ENCODE measurements at regions of chr1 and their contacts with region 1.

Region 1: GRCh38 chr1:47738560-47739182 is 258.5 kb downstream of the TRABD2B start:
- DNase-seq: peak in 3 of 5 donors; percentile 40 to 55 (median 45)
- ATAC-seq: peak; percentile 77 to 86 (median 80)
- H3K4me3 ChIP-seq: no peak overlapping the region
- H3K27ac ChIP-seq: no peak overlapping the region
- H3K4me1 ChIP-seq: no peaks in the 10 kb centered on the region
- H3K27me3 ChIP-seq: peaks cover 0 to 36% (median 8%) of the 10 kb centered on the region in 9 donors
- CTCF ChIP-seq: peak; percentile 61 to 81 (median 74)
- POLR2A ChIP-seq: no peak

Region 2: GRCh38 chr1:47696740-47697441 is 41.8 kb before region 1 on chr1:
- intact Hi-C with region 1: no loop called
- DNase-seq: no peak
- ATAC-seq: no peak
- H3K4me3 ChIP-seq: no peak overlapping the region
- H3K27ac ChIP-seq: no peak overlapping the region
- H3K4me1 ChIP-seq: no peaks in the 10 kb centered on the region
- H3K27me3 ChIP-seq: peaks cover 0 to 13% (median 0%) of the 10 kb centered on the region in 9 donors
- CTCF ChIP-seq: no peak
- POLR2A ChIP-seq: no peak

Region 3: DNA sequence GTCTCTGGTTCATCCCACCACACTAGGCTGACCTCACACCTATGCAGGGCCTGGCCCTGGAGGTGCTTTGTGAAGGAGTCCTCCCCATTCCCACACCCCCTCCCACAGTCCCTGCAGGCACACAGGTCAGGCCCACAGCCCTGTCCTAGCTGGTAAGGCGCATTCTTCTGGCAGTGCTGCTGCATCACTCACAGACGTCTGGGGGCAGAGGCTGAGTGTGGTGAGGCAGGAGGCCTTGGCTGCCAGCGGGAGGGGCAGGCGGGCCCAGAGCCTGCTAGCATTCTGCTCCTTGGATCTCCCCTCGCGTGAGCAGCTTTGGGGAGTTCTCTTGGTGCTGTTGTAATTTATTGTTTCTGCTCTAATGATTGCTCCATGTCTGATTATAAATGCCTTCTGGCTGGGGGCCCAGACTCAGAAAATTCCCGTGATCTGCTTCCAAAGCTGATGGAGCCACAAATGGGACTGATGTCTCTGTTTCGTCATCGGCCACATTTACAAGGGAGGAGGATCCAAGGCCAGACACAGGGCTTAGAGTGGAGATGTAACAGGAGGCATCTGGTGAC is 195.7 kb after region 1 on chr1:
- intact Hi-C with region 1: loop called in 2 of 10 experiments (anchors 5 to 10 kb)
- DNase-seq: peak; percentile 42 to 72 (median 70)
- ATAC-seq: peak; percentile 37 to 71 (median 52)
- H3K4me3 ChIP-seq: no peak overlapping the region
- H3K27ac ChIP-seq: peak overlapping the region in 2 of 12 donors; percentile 18 to 45
- H3K4me1 ChIP-seq: peaks cover 0 to 33% (median 5%) of the 10 kb centered on the region in 12 donors
- H3K27me3 ChIP-seq: no peaks in the 10 kb centered on the region
- CTCF ChIP-seq: no peak
- POLR2A ChIP-seq: no peak

Region 4: GRCh38 chr1:47997289-47998200 is 258.9 kb after region 1 on chr1 and contains the start of gene TRABD2B:
- intact Hi-C with region 1: loop called in 6 of 10 experiments (anchors 2 to 10 kb)
- DNase-seq: peak; percentile 77 to 91 (median 82)
- ATAC-seq: peak; percentile 58 to 89 (median 84)
- H3K4me3 ChIP-seq: peak within 1 kb of the TSS; percentile 49 to 86 (median 63)
- H3K27ac ChIP-seq: peak within 1 kb of the TSS in 11 of 12 donors; percentile 34 to 76 (median 63)
- H3K4me1 ChIP-seq: peaks cover 0 to 23% (median 7%) of the 10 kb centered on the region in 12 donors
- H3K27me3 ChIP-seq: peaks cover 3 to 48% (median 10%) of the 10 kb centered on the region in 9 donors
- CTCF ChIP-seq: peak; percentile 89 to 98 (median 94)
- POLR2A ChIP-seq: peak in 1 of 2 donors; percentile 11
- total RNA-seq, gene TRABD2B: 0.31 to 1.1 (median 0.87) TPM

Region 5: DNA sequence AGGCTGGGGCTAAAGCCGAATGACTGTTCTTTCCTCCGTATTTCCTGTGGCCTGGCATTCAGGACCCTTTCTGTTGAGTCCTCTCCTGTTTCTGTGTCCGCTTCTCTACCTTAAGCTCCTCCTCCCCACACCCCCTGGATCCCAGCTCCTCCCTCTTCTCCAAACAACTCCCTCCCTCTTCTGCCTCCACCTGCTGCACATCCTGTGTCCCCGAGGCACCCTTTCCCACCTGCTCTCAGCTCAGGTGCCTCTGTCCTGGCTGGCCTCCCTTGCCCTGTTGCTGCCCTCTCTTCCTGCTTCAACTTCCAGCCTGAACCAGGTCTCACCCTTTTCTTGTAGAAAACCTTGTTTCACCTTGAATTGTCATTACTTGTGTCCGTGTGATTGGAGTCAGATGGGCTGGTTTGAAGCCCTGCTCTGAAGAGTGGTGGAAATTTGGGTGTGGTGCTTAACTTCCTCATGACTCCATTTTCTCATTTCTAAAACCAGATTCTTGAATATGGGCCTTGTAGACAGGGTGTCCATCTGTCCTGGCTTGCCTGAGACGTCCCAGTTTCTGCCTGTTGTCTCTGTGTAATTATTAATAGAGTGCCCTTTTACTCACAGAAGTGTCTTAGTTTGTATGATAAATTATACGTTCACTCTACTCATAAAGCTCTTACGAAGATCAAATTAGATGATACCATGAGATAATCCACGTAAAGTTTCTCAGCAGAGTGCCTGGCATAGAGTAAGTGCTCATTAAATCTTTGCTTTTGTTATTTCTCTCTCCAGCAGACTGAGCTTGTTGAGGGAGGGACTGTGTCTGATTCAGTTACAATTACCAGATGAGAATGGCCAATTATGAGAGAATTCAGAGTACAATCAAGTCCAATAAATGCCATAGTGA is 317.4 kb after region 1 on chr1:
- intact Hi-C with region 1: loop called (anchors 1 to 5 kb)
- DNase-seq: no peak
- ATAC-seq: no peak
- H3K4me3 ChIP-seq: no peak overlapping the region
- H3K27ac ChIP-seq: no peak overlapping the region
- H3K4me1 ChIP-seq: peaks cover 0 to 13% (median 2%) of the 10 kb centered on the region in 12 donors
- H3K27me3 ChIP-seq: no peaks in the 10 kb centered on the region
- CTCF ChIP-seq: no peak
- POLR2A ChIP-seq: no peak

Region 6: DNA sequence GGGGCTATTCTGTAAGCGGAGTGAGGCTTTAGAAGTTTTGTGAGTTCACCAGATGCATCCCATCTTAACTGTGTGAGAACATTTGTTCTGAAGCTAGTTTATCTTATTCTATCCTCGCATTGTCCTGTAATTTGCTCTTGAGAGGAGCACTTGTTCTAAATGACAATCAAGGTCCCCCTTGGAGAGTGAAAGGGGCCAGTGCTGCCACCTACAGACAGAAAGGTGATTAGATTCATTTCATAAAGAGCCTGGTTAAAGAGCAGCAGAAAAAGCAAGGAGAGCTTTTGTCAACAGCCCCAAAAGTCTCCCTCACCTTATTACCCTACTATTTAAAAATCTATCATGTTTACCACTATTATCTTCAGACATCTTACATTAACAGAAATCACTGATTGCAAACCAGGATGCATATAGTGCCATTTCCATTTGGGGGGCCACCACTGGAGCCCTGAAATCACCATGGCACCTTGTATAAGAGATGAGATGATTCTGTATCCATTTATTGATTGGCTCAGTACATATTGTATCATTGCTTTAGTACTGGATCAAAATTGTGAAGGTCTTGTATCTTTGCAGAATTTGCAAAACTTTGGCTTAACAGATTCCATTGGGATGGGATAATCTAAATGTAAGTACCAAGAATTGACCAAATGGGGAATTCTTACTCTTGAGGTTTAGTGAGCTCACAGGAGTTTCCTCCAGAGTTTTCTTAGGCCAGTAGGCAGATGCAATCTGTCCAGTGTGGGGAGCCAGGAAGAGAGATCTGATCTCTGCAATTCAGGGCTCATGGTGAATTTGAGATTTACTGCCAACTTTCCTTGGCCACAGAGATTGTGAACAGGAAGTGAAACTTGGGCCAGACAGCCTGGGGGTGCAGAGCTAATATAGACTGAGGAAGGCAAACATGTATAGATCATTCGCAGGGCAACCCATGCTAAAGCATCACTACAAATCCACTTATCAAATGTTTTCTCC is 322.8 kb after region 1 on chr1:
- intact Hi-C with region 1: loop called (anchors 1 to 5 kb)
- DNase-seq: peak in 4 of 5 donors; percentile 33 to 57 (median 42)
- ATAC-seq: peak; percentile 65 to 86 (median 74)
- H3K4me3 ChIP-seq: no peak overlapping the region
- H3K27ac ChIP-seq: no peak overlapping the region
- H3K4me1 ChIP-seq: peaks cover 0 to 4% (median 0%) of the 10 kb centered on the region in 12 donors
- H3K27me3 ChIP-seq: no peaks in the 10 kb centered on the region
- CTCF ChIP-seq: peak; percentile 50 to 82 (median 74)
- POLR2A ChIP-seq: no peak

Region 7: GRCh38 chr1:48196237-48196636 is 457.6 kb after region 1 on chr1:
- intact Hi-C with region 1: loop called in 7 of 10 experiments (anchors 5 to 10 kb)
- DNase-seq: no peak
- ATAC-seq: no peak
- H3K4me3 ChIP-seq: no peak overlapping the region
- H3K27ac ChIP-seq: no peak overlapping the region
- H3K4me1 ChIP-seq: peaks cover 0 to 4% (median 0%) of the 10 kb centered on the region in 12 donors
- H3K27me3 ChIP-seq: peaks cover 0 to 13% (median 0%) of the 10 kb centered on the region in 9 donors
- CTCF ChIP-seq: no peak
- POLR2A ChIP-seq: no peak

Region 8: DNA sequence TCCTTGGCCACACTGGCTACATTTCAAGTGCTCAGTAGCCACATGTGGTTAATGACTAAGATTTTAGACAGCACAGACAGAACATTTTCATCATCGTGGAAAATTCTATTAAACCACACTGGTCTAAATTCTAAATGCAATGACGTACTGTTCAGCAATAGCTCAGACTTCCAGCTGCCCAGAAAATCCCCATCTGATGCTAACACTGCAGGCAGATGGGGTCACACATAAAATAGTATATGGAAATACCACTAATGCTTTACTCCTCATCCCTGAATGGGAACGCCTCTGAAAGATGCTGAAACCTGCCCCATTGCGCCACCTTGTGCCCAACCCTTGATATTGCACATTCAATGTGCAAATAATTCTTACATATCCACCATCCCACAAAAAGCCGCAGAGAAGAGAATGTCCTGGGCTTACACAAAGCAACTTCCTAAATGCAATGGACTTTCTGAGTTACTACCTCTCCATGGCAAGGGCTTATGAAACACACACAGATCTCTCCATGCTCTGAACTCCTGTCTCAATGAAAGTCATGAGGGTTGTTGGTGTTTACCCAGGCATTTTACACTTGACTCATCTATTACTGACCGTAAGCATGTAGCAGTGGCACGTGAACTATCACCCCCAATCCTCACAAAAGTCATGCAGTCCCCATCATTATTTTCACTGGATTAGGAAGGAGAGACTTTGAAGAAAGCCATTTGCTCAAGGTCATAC is 463.5 kb after region 1 on chr1:
- intact Hi-C with region 1: loop called in 9 of 10 experiments (anchors 2 to 10 kb)
- DNase-seq: peak; percentile 47 to 73 (median 62)
- ATAC-seq: peak; percentile 37 to 81 (median 67)
- H3K4me3 ChIP-seq: no peak overlapping the region
- H3K27ac ChIP-seq: no peak overlapping the region
- H3K4me1 ChIP-seq: no peaks in the 10 kb centered on the region
- H3K27me3 ChIP-seq: peaks cover 0 to 6% (median 0%) of the 10 kb centered on the region in 9 donors
- CTCF ChIP-seq: peak; percentile 75 to 88 (median 84)
- POLR2A ChIP-seq: no peak

Measured in heart left ventricle (tissue), 16 donors.